Cardiac septum (tissue), 1 donor: ENCODE measurements at regions of chr1 and their contacts with region 1.

Region 1: DNA sequence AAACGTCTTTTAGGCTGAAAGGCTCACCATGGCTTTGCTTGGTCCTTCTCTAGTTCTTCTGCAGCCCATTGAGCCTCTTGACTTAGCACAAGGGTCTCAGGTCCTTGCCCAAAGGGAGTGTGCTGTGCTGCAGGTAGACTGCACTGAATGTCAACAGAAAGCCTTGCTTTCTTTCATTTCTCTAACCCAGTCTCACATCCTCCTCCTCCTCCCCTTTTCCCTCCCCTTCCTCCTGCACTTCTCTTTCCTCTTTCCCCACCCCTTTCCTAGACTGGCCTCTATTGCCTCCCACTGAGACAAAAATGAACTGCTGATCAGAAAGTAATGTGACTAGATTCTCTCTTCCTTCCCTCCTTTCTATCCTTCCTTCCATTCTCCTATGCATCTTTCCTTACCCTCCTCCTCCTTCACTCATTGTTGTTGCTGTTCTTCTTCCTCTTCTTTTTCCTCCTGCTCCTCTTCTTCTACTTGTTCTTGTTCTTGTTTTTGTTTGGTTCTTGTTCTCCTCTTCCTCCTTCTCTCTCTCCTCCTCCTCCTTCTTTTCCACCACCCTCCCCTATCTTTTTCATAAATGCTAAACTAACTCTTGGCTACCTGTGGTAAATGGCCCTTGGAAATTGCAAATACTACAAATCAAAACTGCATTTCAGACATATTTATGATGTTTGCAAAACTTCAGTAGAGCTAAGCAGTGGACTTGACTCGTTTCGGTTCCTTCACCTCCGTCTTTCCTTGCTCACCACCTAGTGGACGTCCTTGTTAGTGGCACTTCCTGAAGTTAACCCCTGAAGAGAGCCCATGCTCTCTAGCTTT is at the start of gene SELL:
- DNase-seq: peak; percentile 77
- total RNA-seq, gene SELL: 4.0 TPM

Region 2: GRCh38 chr1:169601093-169601881 is 110.4 kb before region 1 on chr1:
- intact Hi-C with region 1: loop called (anchors 5 kb)
- DNase-seq: no peak

Region 3: DNA sequence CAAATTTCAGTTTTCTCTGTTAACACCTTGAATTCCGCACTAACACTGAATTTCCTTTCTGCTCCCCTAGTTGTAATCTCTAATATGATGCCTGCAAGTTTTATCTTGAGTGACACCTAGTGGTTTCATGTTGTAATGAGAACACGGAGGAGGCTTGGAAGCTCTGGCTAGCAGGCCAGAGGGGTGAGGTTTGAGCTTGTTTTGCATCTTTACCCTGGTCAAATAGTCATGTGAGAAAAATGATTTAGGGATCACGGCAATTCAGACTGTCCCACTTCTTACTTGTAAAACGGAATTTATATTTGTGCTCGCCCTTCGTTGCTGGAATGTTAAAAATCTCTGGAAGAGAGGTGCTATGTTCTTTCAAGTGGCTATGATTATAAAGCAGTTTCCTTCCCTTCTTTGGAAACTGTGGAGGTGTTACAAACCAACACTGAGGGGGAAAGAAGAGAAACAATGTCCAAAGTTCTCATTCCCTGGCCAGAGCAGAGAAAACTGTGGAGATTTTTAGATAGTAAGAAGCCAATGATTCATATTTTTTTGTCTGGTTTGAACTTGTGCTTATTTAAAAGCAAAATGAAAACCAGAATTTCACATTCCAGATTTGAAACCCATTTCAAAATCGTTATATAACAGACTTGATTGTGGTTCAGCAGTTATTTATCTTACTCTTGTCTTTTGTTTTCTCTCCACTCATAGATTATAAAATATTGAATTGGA is 1218.3 kb after region 1 on chr1:
- intact Hi-C with region 1: no loop called
- DNase-seq: no peak